ENCODE measurements at regions of chr3 and their contacts with region 1.

Region 1: GRCh38 chr3:135806317-135806716 is 159.2 kb upstream of the PPP2R3A start:
- DNase-seq: no peak
- ATAC-seq: no peak

Region 2: GRCh38 chr3:135650309-135650708 is 156.0 kb before region 1 on chr3:
- intact Hi-C with region 1: no loop called
- DNase-seq: no peak
- ATAC-seq: no peak

Region 3: DNA sequence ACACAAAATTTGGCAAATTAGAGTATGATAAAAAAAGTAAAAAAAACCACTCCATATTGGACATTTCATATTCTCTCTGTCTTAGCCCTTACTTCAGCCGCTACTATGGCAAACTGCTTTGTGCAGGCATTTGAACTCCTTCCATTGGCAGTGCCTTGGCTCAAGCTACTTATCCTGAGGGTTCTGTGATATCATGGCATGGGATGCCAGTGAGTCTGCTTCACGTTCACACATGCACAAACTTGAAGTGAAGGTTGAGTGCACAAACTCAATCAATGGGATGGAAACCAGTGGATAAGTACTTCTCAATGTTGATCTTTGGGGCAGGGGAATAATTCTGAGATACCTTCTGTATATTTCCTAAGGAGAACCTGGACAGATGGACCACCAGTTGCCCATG is 1268.7 kb after region 1 on chr3:
- intact Hi-C with region 1: loop called (anchors 5 kb)
- DNase-seq: no peak
- ATAC-seq: no peak

Measured in Right ventricle myocardium inferior (tissue), 1 donor.